Activated CD8-positive, alpha-beta T cell treated with anti-CD3 and anti-CD28 coated beads for 36 hours (primary cell): ENCODE measurements at regions of chr6 and their contacts with region 1.

Region 1: GRCh38 chr6:112043032-112044007 is 10.6 kb upstream of the CCN6 start:
- DNase-seq: peak; percentile 97
- ATAC-seq: peak; percentile 92
- H3K4me3 Mint-ChIP-seq: peak overlapping the region; percentile 86
- H3K27ac Mint-ChIP-seq: peak overlapping the region; percentile 99
- H3K4me1 Mint-ChIP-seq: peaks cover 40% of the 10 kb centered on the region
- H3K27me3 Mint-ChIP-seq: no peaks in the 10 kb centered on the region
- CTCF ChIP-seq: peak; percentile 90

Region 2: DNA sequence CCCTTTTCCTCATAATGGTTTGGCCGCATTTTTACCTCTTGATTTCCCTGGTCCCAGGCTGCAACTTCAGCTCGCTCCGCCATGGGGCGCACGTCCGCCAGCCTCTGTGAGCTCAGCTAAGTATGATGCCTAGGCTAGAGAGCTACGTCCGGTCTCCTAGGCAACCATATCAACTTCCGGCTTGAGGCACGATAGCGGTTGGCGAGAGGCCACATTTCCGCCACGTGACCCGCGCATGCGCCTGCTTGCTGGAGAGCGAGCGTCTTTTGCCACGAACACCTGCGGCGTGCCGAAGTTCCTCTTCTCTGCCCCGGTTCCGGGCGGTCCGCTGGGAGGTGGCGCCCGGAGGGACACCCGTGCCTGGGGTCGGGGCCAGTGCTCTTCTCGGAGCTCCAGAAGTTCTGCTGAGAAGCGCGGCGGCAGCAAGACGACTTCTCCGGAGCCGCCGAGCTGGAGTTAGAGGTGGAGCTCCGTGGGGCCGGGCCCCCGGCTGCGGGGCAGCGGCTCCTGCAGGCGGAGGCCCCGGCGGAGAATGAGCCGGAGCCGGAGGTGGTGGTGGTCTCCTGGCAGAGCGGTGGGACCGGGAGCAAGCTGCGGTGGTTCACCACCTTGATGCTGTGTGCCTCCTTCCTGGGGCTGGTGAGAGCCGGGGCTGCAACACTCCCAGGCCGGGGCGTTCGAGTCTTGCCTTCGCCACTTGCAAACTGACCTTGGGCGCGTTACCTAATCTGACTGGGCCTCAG is 784.1 kb before region 1 on chr6:
- CTCF ChIA-PET with region 1: interaction called, 19 read pairs
- POLR2A ChIA-PET with region 1: interaction called, 3 read pairs
- intact Hi-C with region 1: loop called (anchors 2 kb)
- DNase-seq: peak; percentile 99
- ATAC-seq: peak; percentile 97
- H3K4me3 Mint-ChIP-seq: peak overlapping the region; percentile 81
- H3K27ac Mint-ChIP-seq: peak overlapping the region; percentile 78
- H3K4me1 Mint-ChIP-seq: peaks cover 32% of the 10 kb centered on the region
- H3K27me3 Mint-ChIP-seq: no peaks in the 10 kb centered on the region
- CTCF ChIP-seq: peak; percentile 90

Region 3: GRCh38 chr6:111709615-111710398 is 333.5 kb before region 1 on chr6:
- CTCF ChIA-PET with region 1: interaction called, 64 read pairs
- POLR2A ChIA-PET with region 1: interaction called, 5 read pairs
- intact Hi-C with region 1: loop called (anchors 1 kb)
- DNase-seq: peak; percentile 67
- ATAC-seq: peak; percentile 79
- H3K4me3 Mint-ChIP-seq: no peak overlapping the region
- H3K27ac Mint-ChIP-seq: peak overlapping the region; percentile 92
- H3K4me1 Mint-ChIP-seq: peaks cover 63% of the 10 kb centered on the region
- H3K27me3 Mint-ChIP-seq: no peaks in the 10 kb centered on the region
- CTCF ChIP-seq: peak; percentile 73

Region 4: GRCh38 chr6:111873178-111874024 is 169.9 kb before region 1 on chr6 and contains the start of gene FYN:
- CTCF ChIA-PET with region 1: interaction called, 9 read pairs
- POLR2A ChIA-PET with region 1: interaction called, 4 read pairs
- intact Hi-C with region 1: loop called (anchors 2 kb)
- DNase-seq: peak; percentile 100
- ATAC-seq: peak; percentile 86
- H3K4me3 Mint-ChIP-seq: peak within 1 kb of the TSS; percentile 98
- H3K27ac Mint-ChIP-seq: peak within 1 kb of the TSS; percentile 98
- H3K4me1 Mint-ChIP-seq: peaks cover 30% of the 10 kb centered on the region
- H3K27me3 Mint-ChIP-seq: no peaks in the 10 kb centered on the region
- CTCF ChIP-seq: peak; percentile 45
- total RNA-seq, gene FYN: 384 to 386 TPM

Region 5: GRCh38 chr6:112010328-112010727 is 33.0 kb before region 1 on chr6:
- CTCF ChIA-PET with region 1: interaction called, 29 read pairs
- POLR2A ChIA-PET with region 1: interaction called, 6 read pairs
- intact Hi-C with region 1: no loop called
- DNase-seq: peak; percentile 37
- ATAC-seq: peak; percentile 74
- H3K4me3 Mint-ChIP-seq: no peak overlapping the region
- H3K27ac Mint-ChIP-seq: no peak overlapping the region
- H3K4me1 Mint-ChIP-seq: peaks cover 40% of the 10 kb centered on the region
- H3K27me3 Mint-ChIP-seq: no peaks in the 10 kb centered on the region
- CTCF ChIP-seq: no peak

Region 6: DNA sequence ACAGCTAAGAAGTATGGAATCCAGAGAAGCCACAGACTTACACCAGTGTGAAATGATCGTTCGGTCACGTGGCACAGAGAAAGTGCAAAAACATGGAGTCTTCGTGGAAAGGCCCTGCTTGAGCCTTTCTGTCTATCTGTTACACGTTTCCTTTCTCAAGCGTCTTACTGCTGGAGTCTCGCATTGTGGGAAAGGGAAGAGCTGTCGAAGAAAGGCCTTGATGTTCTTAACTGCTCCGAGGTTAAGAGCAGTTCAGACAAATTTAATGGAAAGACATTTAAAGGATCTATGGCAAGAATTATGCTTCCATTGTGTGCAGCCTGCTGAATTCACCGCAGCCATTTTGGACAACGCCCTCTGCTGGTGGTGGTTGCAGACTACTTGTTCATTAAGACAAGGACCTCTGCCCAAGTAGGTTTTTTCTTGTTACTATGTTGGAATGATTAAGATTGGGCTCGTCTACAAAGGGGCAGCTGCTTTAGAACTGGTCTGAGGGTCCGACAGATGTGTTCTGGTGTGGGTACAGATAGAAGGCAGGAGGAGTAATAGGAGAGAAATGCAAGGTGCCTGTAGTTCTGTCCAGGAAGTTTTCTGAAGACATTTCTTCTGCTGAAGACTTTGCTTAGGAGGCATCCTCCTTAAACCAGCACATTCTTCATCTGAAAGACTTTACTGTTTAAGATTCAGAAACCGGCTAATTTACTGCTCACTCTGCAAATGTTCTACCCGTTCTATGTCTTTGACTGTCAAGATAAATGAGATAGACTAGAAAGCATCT is 14.1 kb before region 1 on chr6:
- CTCF ChIA-PET with region 1: interaction called, 80 read pairs
- POLR2A ChIA-PET with region 1: interaction called, 4 read pairs
- intact Hi-C with region 1: no loop called
- DNase-seq: peak; percentile 88
- ATAC-seq: no peak
- H3K4me3 Mint-ChIP-seq: no peak overlapping the region
- H3K27ac Mint-ChIP-seq: peak overlapping the region; percentile 92
- H3K4me1 Mint-ChIP-seq: peaks cover 71% of the 10 kb centered on the region
- H3K27me3 Mint-ChIP-seq: no peaks in the 10 kb centered on the region
- CTCF ChIP-seq: peak; percentile 91

Region 7: GRCh38 chr6:112163295-112164257 is 120.3 kb after region 1 on chr6:
- CTCF ChIA-PET with region 1: interaction called, 12 read pairs
- POLR2A ChIA-PET with region 1: no interaction called
- intact Hi-C with region 1: no loop called
- DNase-seq: peak; percentile 90
- ATAC-seq: peak; percentile 98
- H3K4me3 Mint-ChIP-seq: peak overlapping the region; percentile 42
- H3K27ac Mint-ChIP-seq: no peak overlapping the region
- H3K4me1 Mint-ChIP-seq: peaks cover 12% of the 10 kb centered on the region
- H3K27me3 Mint-ChIP-seq: peaks cover 42% of the 10 kb centered on the region
- CTCF ChIP-seq: peak; percentile 97